ENCODE measurements at regions of chr4 and their contacts with region 1.

Region 1: GRCh38 chr4:73308286-73308685 is 49.7 kb upstream of the ANKRD17 start:
- DNase-seq: no peak
- H3K4me3 ChIP-seq: no peak overlapping the region
- H3K4me3 Mint-ChIP-seq: no peak overlapping the region
- H3K27ac Mint-ChIP-seq: no peak overlapping the region
- H3K4me1 ChIP-seq: no peaks in the 10 kb centered on the region
- H3K4me1 Mint-ChIP-seq: peaks cover 11% of the 10 kb centered on the region
- H3K27me3 ChIP-seq: no peaks in the 10 kb centered on the region
- H3K27me3 Mint-ChIP-seq: no peaks in the 10 kb centered on the region
- CTCF ChIP-seq: peak; percentile 23 to 40

Region 2: GRCh38 chr4:72468904-72469502 is 839.3 kb before region 1 on chr4:
- CTCF ChIA-PET with region 1: no interaction called
- POLR2A ChIA-PET with region 1: no interaction called
- intact Hi-C with region 1: no loop called
- DNase-seq: no peak
- H3K4me3 ChIP-seq: no peak overlapping the region
- H3K4me3 Mint-ChIP-seq: no peak overlapping the region
- H3K27ac Mint-ChIP-seq: no peak overlapping the region
- H3K4me1 ChIP-seq: no peaks in the 10 kb centered on the region
- H3K4me1 Mint-ChIP-seq: no peaks in the 10 kb centered on the region
- H3K27me3 ChIP-seq: no peaks in the 10 kb centered on the region
- H3K27me3 Mint-ChIP-seq: no peaks in the 10 kb centered on the region
- CTCF ChIP-seq: peak; percentile 25 to 55

Region 3: GRCh38 chr4:73127839-73128453 is 180.3 kb before region 1 on chr4:
- CTCF ChIA-PET with region 1: no interaction called
- POLR2A ChIA-PET with region 1: no interaction called
- intact Hi-C with region 1: loop called (anchors 1 kb)
- DNase-seq: peak in 1 of 2 experiments; percentile 10
- H3K4me3 ChIP-seq: no peak overlapping the region
- H3K4me3 Mint-ChIP-seq: no peak overlapping the region
- H3K27ac Mint-ChIP-seq: no peak overlapping the region
- H3K4me1 ChIP-seq: no peaks in the 10 kb centered on the region
- H3K4me1 Mint-ChIP-seq: no peaks in the 10 kb centered on the region
- H3K27me3 ChIP-seq: no peaks in the 10 kb centered on the region
- H3K27me3 Mint-ChIP-seq: no peaks in the 10 kb centered on the region
- CTCF ChIP-seq: peak in 1 of 2 experiments; percentile 31

Region 4: DNA sequence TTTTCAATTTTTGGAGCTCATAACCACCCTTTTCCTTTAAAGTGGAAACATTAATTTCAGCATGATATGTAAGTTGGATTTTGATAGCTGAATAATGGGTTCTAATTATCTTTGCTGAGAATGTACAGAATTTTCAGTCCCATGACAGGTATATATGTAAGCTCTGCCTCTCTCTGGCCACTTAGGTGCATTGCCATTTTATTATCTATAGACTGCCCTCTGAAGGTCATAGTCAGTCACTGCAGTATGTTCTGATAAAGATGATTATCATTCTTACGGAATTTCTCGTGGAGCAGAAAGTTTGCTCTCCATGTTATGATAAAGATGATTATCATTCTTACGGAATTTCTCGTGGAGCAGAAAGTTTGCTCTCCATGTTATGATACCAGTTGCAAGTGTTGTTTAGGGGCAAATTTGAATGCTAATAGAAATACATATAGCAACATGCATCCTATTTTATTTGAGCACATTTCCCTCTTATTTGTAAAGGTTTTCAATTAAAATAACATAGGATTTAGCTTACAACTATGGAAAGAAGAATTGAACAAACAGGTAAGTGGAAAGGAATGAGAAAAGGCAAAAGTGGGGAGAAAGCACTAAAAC is 138.2 kb after region 1 on chr4:
- CTCF ChIA-PET with region 1: interaction called, 4 read pairs
- POLR2A ChIA-PET with region 1: no interaction called
- intact Hi-C with region 1: loop called (anchors 1 kb)
- DNase-seq: peak; percentile 36 to 45
- H3K4me3 ChIP-seq: no peak overlapping the region
- H3K4me3 Mint-ChIP-seq: no peak overlapping the region
- H3K27ac Mint-ChIP-seq: no peak overlapping the region
- H3K4me1 ChIP-seq: peaks cover 21% of the 10 kb centered on the region
- H3K4me1 Mint-ChIP-seq: no peaks in the 10 kb centered on the region
- H3K27me3 ChIP-seq: no peaks in the 10 kb centered on the region
- H3K27me3 Mint-ChIP-seq: no peaks in the 10 kb centered on the region
- CTCF ChIP-seq: peak; percentile 76 to 81

Region 5: DNA sequence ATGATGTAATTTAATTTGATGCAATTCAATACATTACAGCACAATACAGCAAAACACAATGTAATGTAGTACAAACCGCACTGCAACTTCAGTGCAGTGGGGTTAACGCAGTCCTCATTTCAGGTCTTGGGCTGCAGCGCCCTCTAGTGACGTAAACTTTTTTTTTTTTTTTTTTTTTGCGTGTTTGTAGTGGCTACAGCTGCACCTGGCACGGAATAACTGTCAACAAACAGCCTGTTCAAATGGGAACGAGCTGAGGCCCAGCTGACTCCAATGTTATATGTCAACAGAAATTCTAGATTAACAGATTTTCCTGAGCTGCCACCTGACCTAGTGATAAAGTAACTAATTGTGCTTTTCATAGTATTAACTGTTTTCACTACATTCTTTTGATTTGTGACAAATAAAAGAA is 345.4 kb after region 1 on chr4:
- CTCF ChIA-PET with region 1: no interaction called
- POLR2A ChIA-PET with region 1: no interaction called
- intact Hi-C with region 1: loop called (anchors 1 kb)
- DNase-seq: peak in 1 of 2 experiments; percentile 28
- H3K4me3 ChIP-seq: no peak overlapping the region
- H3K4me3 Mint-ChIP-seq: no peak overlapping the region
- H3K27ac Mint-ChIP-seq: no peak overlapping the region
- H3K4me1 ChIP-seq: no peaks in the 10 kb centered on the region
- H3K4me1 Mint-ChIP-seq: no peaks in the 10 kb centered on the region
- H3K27me3 ChIP-seq: no peaks in the 10 kb centered on the region
- H3K27me3 Mint-ChIP-seq: no peaks in the 10 kb centered on the region
- CTCF ChIP-seq: peak; percentile 46 to 63

Measured in Caco-2 (cell line).